ENCODE measurements at regions of chr14 and their contacts with region 1.

Region 1: DNA sequence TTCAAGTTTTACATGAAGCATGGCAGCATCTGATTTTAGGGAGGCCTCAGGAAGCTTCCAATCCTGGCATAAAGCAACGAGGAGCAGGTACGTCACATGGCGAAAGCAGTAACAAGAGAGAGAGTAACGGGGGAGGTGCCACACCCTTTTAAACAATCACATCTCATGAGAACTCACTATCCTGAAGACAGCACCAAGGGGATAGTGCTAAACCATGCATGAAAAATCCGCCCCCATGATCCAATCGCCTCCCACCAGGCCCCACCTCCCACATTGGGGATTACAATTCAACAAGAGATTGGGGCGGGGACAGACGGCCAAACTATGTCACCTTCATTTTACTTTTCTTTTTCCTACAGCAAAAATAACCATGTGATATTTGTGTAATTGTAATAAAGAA is 7.2 kb upstream of the MAP3K9 start:
- DNase-seq: no peak
- ATAC-seq: no peak
- H3K4me3 ChIP-seq: no peak overlapping the region
- H3K4me3 Mint-ChIP-seq: no peak overlapping the region
- H3K27ac ChIP-seq: no peak overlapping the region
- H3K27ac Mint-ChIP-seq: no peak overlapping the region
- H3K4me1 ChIP-seq: peaks cover 15 to 23% of the 10 kb centered on the region in 2 donors
- H3K4me1 Mint-ChIP-seq: peaks cover 18% of the 10 kb centered on the region
- H3K27me3 ChIP-seq: peaks cover 0 to 19% (median 16%) of the 10 kb centered on the region in 4 experiments
- H3K27me3 Mint-ChIP-seq: peaks cover 25% of the 10 kb centered on the region
- CTCF ChIP-seq: no peak

Region 2: DNA sequence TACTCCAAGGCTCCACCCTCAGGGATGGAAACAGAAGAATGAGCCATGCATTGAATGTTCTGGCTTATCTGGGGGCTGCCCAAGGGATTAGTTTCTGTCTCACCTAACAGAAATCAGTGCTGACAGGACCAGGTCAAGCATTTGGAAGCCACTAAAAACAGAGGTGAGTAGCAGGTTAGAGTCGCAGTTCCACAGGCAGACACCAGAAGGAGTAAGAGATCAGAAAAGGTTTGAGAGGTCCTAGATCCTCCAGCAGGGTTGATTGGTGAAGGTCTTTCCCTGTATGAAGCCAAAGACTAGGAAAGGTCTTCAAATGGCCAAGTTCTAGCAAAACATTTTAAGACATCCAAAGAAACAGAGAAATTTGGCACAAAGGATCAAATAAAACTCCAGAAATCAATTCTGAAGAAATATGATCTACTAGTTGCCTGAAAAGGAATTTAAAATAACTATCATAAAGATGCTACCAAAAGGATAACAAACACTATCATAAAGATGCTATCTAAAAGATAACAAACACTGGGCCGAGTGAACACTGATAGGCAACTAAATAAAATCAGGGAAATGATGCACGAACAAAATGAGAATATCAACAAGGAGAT is 194.3 kb before region 1 on chr14:
- CTCF ChIA-PET with region 1: interaction called, 78 read pairs
- POLR2A ChIA-PET with region 1: no interaction called
- intact Hi-C with region 1: loop called (anchors 1 kb)
- DNase-seq: peak; percentile 73
- ATAC-seq: peak; percentile 82
- H3K4me3 ChIP-seq: no peak overlapping the region
- H3K4me3 Mint-ChIP-seq: no peak overlapping the region
- H3K27ac ChIP-seq: no peak overlapping the region
- H3K27ac Mint-ChIP-seq: no peak overlapping the region
- H3K4me1 ChIP-seq: peaks cover 7 to 10% of the 10 kb centered on the region in 2 donors
- H3K4me1 Mint-ChIP-seq: peaks cover 22% of the 10 kb centered on the region
- H3K27me3 ChIP-seq: no peaks in the 10 kb centered on the region
- H3K27me3 Mint-ChIP-seq: no peaks in the 10 kb centered on the region
- CTCF ChIP-seq: peak; percentile 85

Region 3: GRCh38 chr14:70759398-70759797 is 57.1 kb before region 1 on chr14:
- CTCF ChIA-PET with region 1: interaction called, 15 read pairs
- POLR2A ChIA-PET with region 1: no interaction called
- intact Hi-C with region 1: no loop called
- DNase-seq: no peak
- ATAC-seq: no peak
- H3K4me3 ChIP-seq: no peak overlapping the region
- H3K4me3 Mint-ChIP-seq: no peak overlapping the region
- H3K27ac ChIP-seq: no peak overlapping the region
- H3K27ac Mint-ChIP-seq: no peak overlapping the region
- H3K4me1 ChIP-seq: no peaks in the 10 kb centered on the region
- H3K4me1 Mint-ChIP-seq: no peaks in the 10 kb centered on the region
- H3K27me3 ChIP-seq: no peaks in the 10 kb centered on the region
- H3K27me3 Mint-ChIP-seq: no peaks in the 10 kb centered on the region
- CTCF ChIP-seq: no peak

Region 4: GRCh38 chr14:70803321-70804310 is 12.9 kb before region 1 on chr14:
- CTCF ChIA-PET with region 1: interaction called, 42 read pairs
- POLR2A ChIA-PET with region 1: no interaction called
- intact Hi-C with region 1: loop called (anchors 2 kb)
- DNase-seq: peak; percentile 66
- ATAC-seq: peak; percentile 76
- H3K4me3 ChIP-seq: peak overlapping the region in 3 of 5 experiments; percentile 0 to 45 (median 24)
- H3K4me3 Mint-ChIP-seq: peak overlapping the region; percentile 62
- H3K27ac ChIP-seq: peak overlapping the region; percentile 6 to 50
- H3K27ac Mint-ChIP-seq: peak overlapping the region; percentile 74
- H3K4me1 ChIP-seq: peaks cover 24 to 30% of the 10 kb centered on the region in 2 donors
- H3K4me1 Mint-ChIP-seq: peaks cover 42% of the 10 kb centered on the region
- H3K27me3 ChIP-seq: no peaks in the 10 kb centered on the region
- H3K27me3 Mint-ChIP-seq: no peaks in the 10 kb centered on the region
- CTCF ChIP-seq: no peak

Region 5: GRCh38 chr14:70955543-70956480 is 139.3 kb after region 1 on chr14:
- CTCF ChIA-PET with region 1: interaction called, 46 read pairs
- POLR2A ChIA-PET with region 1: no interaction called
- intact Hi-C with region 1: loop called (anchors 5 kb)
- DNase-seq: peak; percentile 38
- ATAC-seq: peak; percentile 39
- H3K4me3 ChIP-seq: no peak overlapping the region
- H3K4me3 Mint-ChIP-seq: no peak overlapping the region
- H3K27ac ChIP-seq: no peak overlapping the region
- H3K27ac Mint-ChIP-seq: no peak overlapping the region
- H3K4me1 ChIP-seq: no peaks in the 10 kb centered on the region
- H3K4me1 Mint-ChIP-seq: peaks cover 4% of the 10 kb centered on the region
- H3K27me3 ChIP-seq: no peaks in the 10 kb centered on the region
- H3K27me3 Mint-ChIP-seq: no peaks in the 10 kb centered on the region
- CTCF ChIP-seq: peak; percentile 57